IMR-90 (cell line): ENCODE measurements at regions of chr2 and their contacts with region 1.

Region 1: DNA sequence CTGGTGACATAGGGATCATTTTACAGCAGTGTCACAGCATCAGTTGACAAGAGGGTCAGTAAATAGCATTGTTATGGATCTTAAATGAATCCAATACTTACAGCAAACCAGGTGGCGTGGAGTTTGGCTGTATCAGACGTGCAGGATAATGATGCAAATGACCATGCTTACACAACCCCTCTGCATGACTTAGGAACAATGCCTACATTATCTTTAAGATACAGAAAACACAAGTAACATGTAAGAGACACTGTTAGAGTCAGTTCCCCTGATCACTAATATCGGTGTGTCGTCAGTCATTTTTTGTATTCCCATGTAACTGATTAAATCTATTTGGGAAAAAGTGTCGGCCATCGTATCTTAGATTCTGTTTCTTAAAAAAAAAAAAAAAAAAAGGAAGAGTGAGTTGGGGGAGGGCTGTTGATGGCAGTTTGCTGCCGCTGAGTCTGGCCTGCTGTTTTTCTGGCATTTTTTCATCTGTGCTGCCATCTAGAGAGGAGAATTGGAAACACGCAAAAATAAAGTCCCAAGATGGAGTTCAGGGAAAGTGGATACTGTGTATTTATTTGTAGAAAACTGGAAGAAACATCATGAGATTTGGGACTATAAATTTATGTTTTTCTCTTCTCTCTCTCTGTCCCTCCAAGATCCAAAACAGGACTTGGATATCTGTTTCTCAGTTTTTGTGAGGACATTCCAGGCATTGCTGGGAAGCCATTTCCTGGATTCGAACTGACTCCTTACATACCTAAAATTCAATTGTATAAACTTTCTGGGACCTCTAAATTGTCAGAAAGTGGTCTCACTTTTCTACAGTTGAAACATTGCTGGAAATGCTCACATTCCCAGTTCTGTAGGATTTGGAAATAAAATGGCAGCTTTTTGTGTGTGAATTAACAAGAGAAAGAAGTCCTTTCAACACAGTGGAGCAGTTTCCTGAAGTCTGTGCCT is 60.3 kb upstream of the AGPS start:
- DNase-seq: peak; percentile 83
- ATAC-seq: peak; percentile 74
- H3K4me3 ChIP-seq: no peak overlapping the region
- H3K27ac ChIP-seq: peak overlapping the region; percentile 98
- H3K4me1 ChIP-seq: peaks cover 18% of the 10 kb centered on the region
- H3K27me3 ChIP-seq: no peaks in the 10 kb centered on the region
- CTCF ChIP-seq: peak; percentile 78
- POLR2A ChIP-seq: no peak
- RAD21 ChIP-seq: peak; percentile 78

Region 2: DNA sequence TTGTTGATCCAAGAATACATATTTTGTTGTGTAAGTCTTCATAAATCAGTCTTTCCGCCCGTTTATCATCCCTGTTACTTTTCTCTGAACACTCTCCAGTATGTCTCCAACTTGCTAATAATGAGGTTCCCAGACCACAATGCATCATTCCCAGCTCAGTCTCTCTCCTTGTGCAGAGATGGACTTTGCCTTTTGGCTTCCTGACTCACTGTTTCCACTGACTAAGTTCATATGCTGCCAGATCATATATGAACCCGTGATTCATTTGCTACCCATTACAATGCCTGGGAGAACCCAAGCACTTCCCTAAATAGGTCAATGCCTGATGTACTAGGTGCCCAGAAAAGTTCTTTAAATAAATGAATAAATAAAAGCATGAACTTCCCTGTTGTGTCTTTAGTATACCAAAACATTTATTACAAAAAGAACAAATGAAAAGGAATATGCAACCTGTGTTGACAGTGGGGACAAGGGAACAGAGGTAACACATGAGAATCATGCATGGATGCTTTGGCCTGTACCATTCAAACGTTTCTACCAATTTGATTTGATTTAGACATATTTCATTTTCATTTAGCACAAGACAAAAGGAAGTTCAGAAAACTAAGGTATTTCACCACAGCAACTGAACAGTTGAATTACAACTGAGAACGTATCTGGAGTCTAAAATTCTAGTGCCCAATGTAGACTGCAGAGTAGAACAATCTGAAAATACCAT is 335.1 kb before region 1 on chr2:
- CTCF ChIA-PET with region 1: no interaction called
- POLR2A ChIA-PET with region 1: no interaction called
- dilution Hi-C with region 1: no loop called
- in situ Hi-C with region 1: no loop called
- intact Hi-C with region 1: no loop called
- DNase-seq: peak; percentile 72
- ATAC-seq: no peak
- H3K4me3 ChIP-seq: no peak overlapping the region
- H3K27ac ChIP-seq: no peak overlapping the region
- H3K4me1 ChIP-seq: no peaks in the 10 kb centered on the region
- H3K27me3 ChIP-seq: no peaks in the 10 kb centered on the region
- CTCF ChIP-seq: no peak
- POLR2A ChIP-seq: no peak
- RAD21 ChIP-seq: no peak

Region 3: DNA sequence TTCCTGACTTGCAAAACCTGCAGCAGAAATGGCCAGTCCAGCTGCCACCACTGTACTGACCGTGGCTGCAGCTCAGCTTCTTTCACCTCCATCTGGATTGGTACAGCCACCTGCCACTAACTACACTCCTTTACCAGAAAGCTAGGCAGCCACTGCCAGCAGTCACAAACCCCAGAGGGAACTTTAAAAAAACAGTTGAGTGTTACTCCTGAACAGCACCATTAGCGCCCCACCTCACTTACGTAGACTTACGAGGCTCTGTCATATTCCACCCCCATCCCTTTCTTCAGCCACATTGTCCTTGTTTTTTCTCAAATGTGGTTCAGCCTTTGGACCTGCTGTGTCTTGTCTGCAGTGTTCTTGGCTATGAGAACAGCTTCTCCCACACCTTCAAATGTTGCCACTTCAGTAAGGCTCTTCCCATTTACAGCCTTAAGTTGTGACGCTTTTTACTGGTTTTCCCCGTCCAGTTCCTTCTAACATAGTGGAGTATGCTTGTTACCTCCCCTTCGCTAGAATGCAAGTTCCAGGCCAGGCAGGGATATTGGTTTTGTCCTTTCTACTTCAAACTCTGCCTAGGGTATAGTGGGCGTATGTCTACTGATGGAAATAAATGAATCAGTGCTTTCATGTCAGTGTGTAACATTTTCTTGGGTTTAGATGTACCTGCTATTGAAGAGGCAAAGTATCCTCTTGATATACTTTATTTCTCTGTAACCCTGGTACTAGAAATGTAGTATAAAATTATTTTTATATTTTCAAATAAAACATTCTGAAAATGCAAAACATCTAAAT is 102.7 kb before region 1 on chr2:
- CTCF ChIA-PET with region 1: no interaction called
- POLR2A ChIA-PET with region 1: no interaction called
- dilution Hi-C with region 1: no loop called
- in situ Hi-C with region 1: no loop called
- intact Hi-C with region 1: loop called (anchors 2 kb)
- DNase-seq: no peak
- ATAC-seq: no peak
- H3K4me3 ChIP-seq: no peak overlapping the region
- H3K27ac ChIP-seq: peak overlapping the region; percentile 14; the same call in 1 of the 2 replicates
- H3K4me1 ChIP-seq: peaks cover 8% of the 10 kb centered on the region; the same call in 1 of the 2 replicates
- H3K27me3 ChIP-seq: no peaks in the 10 kb centered on the region
- CTCF ChIP-seq: no peak
- POLR2A ChIP-seq: no peak; the same call in 1 of the 2 replicates
- RAD21 ChIP-seq: no peak

Region 4: GRCh38 chr2:177263451-177264208 is 68.7 kb before region 1 on chr2:
- CTCF ChIA-PET with region 1: interaction called, 8 read pairs
- POLR2A ChIA-PET with region 1: interaction called, 6 read pairs
- dilution Hi-C with region 1: no loop called
- in situ Hi-C with region 1: loop called (anchors 5 kb)
- intact Hi-C with region 1: loop called (anchors 1 kb)
- DNase-seq: peak; percentile 97
- ATAC-seq: peak; percentile 50
- H3K4me3 ChIP-seq: peak overlapping the region; percentile 69
- H3K27ac ChIP-seq: peak overlapping the region; percentile 89
- H3K4me1 ChIP-seq: peaks cover 3% of the 10 kb centered on the region
- H3K27me3 ChIP-seq: no peaks in the 10 kb centered on the region
- CTCF ChIP-seq: peak; percentile 90
- POLR2A ChIP-seq: peak; percentile 62
- RAD21 ChIP-seq: peak; percentile 77

Region 5: DNA sequence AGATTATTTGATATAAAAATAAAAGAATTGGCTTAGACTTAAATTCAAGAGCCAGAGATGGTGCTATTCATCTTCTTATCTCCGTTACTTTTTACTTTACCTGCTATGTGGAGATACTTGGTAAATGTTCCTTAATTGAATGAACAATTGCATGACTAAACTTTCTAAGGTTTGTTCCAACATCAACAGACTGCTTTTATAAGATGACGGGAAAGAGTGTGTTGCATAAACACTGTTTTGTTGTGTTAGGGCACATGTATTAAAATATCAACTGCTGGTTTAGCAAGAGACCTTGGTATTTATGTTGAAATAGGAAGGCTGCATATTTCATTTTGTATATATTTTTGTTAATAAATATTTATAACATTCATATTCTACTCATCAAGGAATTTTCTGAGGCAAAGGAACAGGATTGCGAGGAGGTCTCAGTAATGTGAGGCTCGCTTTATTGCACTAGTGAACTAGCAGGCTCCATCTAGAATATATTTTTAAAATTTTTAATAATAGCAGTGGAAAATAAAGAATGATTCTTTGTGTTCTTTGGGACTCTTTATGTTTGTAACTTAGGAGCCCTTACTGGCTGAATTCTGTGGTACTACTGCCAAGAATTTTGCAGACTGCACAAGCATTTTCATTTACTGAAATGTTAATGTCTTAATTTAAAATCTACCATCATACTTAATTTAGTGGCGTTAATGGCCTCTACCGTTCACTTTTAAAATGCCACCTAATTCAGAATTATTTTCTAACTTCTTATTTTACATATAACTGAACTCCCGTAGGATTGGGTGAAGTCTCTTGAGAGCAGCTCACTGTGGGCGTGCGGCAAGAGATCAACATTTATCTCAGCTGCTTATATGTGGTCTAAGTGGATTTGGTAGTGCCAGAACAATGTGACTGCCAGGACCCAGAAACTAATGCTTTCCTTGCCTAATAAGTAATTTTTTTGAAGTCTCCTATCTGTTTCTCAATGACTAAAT is 57.0 kb before region 1 on chr2:
- CTCF ChIA-PET with region 1: no interaction called
- POLR2A ChIA-PET with region 1: no interaction called
- dilution Hi-C with region 1: no loop called
- in situ Hi-C with region 1: no loop called
- intact Hi-C with region 1: no loop called
- DNase-seq: peak; percentile 94
- ATAC-seq: peak; percentile 89
- H3K4me3 ChIP-seq: no peak overlapping the region
- H3K27ac ChIP-seq: peak overlapping the region; percentile 97
- H3K4me1 ChIP-seq: peaks cover 5% of the 10 kb centered on the region
- H3K27me3 ChIP-seq: no peaks in the 10 kb centered on the region
- CTCF ChIP-seq: no peak
- POLR2A ChIP-seq: no peak
- RAD21 ChIP-seq: no peak

Region 6: DNA sequence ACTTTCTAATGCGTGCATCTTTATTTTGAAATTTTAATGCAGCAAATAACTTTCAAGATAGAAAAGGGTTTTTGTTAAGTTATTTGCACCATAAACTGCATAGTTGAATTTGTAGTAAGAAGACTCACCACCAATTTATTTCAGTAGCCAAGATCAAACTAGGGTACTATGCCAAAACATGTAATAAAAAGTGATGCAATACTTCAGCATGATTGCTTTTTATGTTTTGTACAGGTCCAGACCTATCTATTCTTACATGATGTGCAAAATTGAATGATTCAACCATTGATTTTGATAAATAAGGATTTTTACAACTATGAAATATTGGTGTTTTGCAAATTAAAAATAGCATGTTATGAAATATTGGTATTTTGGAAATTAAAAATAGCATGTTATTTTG is 87.0 kb after region 1 on chr2:
- CTCF ChIA-PET with region 1: interaction called, 13 read pairs
- POLR2A ChIA-PET with region 1: no interaction called
- dilution Hi-C with region 1: no loop called
- in situ Hi-C with region 1: loop called (anchors 5 kb)
- intact Hi-C with region 1: loop called (anchors 1 kb)
- DNase-seq: peak; percentile 61
- ATAC-seq: no peak
- H3K4me3 ChIP-seq: no peak overlapping the region
- H3K27ac ChIP-seq: no peak overlapping the region
- H3K4me1 ChIP-seq: no peaks in the 10 kb centered on the region
- H3K27me3 ChIP-seq: no peaks in the 10 kb centered on the region
- CTCF ChIP-seq: no peak
- POLR2A ChIP-seq: no peak
- RAD21 ChIP-seq: no peak

Region 7: DNA sequence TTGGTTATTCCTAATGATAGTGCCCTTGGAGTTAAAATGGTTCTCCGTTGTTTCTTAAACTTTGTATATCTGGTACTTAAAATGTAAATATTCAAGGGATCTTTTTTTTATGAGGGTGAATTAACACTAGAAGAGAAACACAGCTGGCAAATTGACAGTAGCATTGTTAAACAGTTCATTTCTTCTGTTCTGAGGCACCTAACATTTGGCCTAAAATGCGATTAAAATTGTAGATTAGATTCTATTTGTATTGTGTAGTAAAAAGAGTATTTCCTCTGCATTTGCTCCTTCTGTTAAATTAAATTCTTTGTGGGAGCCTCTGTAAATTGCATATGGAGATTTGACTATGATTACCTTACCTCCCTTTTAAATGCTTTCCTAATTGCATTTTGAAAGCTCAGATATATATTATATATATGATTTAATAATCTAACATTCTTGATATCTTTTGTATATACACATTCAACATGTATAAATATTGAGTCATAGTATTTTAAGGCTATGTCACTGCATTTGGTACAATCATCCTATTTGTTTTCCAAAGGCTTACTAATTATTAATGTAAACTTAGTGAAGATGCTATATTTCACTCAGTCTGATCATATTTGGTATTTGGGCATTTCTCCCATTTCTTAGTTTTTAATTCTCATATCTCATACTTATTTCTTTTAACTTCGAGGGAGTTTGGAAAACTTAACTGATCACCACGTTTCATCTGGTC is 184.7 kb after region 1 on chr2:
- CTCF ChIA-PET with region 1: no interaction called
- POLR2A ChIA-PET with region 1: no interaction called
- dilution Hi-C with region 1: no loop called
- in situ Hi-C with region 1: no loop called
- intact Hi-C with region 1: no loop called
- DNase-seq: peak; percentile 12
- ATAC-seq: peak; percentile 24; the same call in 1 of the 2 replicates
- H3K4me3 ChIP-seq: no peak overlapping the region
- H3K27ac ChIP-seq: no peak overlapping the region
- H3K4me1 ChIP-seq: peaks cover 2% of the 10 kb centered on the region; the same call in 1 of the 2 replicates
- H3K27me3 ChIP-seq: no peaks in the 10 kb centered on the region
- CTCF ChIP-seq: no peak
- POLR2A ChIP-seq: no peak
- RAD21 ChIP-seq: no peak

Region 8: DNA sequence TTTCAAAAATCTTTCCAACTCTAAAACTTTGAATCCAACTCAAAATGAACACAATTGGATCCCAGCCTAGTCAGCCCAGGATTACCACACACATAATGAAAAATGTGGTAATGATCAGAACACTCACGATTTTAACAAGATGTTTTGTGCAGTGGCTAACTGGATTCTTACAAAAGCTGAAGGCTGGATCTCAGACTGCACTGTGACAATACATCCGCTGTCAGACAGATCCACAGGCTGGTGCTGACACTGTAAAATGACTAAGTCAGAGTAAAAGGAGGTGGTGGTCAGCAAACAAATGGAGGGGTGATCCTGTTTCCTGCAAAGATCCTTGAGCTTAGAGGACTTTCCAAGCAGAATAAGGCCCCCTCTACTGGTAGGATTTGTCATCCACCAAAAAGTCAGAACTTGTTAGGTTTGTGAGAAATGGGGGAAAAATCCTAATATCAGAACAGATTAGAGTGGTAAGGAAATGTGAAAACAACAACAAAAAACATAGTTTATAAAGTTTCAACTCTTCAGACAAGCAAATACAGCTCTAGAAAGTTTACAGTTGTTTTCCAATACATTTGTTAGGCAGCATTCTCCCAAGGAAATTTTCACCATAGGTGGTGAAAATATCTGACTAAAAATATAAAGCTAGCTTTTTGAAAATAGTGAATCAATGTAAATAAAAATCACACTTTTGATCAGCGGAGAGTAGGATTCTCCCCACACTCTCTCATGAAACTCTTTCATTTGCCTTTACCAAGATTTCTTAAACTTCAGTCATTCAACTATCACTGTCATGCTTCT is 272.2 kb after region 1 on chr2:
- CTCF ChIA-PET with region 1: no interaction called
- POLR2A ChIA-PET with region 1: no interaction called
- dilution Hi-C with region 1: no loop called
- in situ Hi-C with region 1: loop called (anchors 10 kb)
- intact Hi-C with region 1: loop called (anchors 1 kb)
- DNase-seq: peak; percentile 71
- ATAC-seq: peak; percentile 91
- H3K4me3 ChIP-seq: no peak overlapping the region
- H3K27ac ChIP-seq: no peak overlapping the region; the same call in 1 of the 2 replicates
- H3K4me1 ChIP-seq: peaks cover 2% of the 10 kb centered on the region
- H3K27me3 ChIP-seq: peaks cover 4% of the 10 kb centered on the region; the same call in 1 of the 2 replicates
- CTCF ChIP-seq: peak; percentile 72
- POLR2A ChIP-seq: no peak
- RAD21 ChIP-seq: peak; percentile 63

Region 9: DNA sequence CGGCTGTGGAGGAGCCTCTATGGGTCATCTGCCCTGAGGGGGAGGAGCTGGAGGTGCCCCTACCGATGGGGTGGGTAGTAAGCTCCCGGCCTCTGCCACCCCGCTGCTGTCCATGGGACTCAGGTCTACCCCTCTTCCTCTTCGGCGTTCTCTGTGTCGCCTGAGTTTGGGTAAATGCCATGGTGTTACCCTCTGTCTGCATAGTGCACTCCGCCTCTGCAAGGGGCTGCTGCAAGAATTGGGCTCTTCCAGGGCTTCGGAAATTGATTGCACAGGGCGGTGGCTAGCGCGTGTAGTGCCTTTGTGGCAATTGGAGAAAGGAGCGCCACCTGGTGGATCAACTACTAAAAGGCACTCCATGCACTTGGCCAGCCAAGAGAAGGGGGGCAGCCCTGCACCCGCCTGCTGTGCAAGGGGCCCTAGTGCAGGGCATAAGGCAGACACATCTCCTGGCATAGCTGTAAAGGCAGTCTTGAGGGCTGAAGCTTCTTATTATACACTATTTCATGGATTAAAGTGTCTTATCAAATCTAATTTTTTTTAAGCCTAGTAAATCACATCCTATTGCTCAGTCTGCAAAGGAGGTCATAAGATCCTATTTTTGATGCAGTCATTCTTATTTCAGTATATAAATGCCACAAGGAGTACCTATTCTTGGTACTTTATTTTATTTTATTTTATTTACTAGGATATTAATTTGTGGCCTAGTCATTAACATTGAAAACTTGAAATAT is 431.4 kb after region 1 on chr2:
- CTCF ChIA-PET with region 1: interaction called, 9 read pairs
- POLR2A ChIA-PET with region 1: no interaction called
- dilution Hi-C with region 1: no loop called
- in situ Hi-C with region 1: no loop called
- intact Hi-C with region 1: loop called (anchors 1 kb)
- DNase-seq: peak; percentile 58
- ATAC-seq: peak; percentile 98
- H3K4me3 ChIP-seq: no peak overlapping the region
- H3K27ac ChIP-seq: no peak overlapping the region
- H3K4me1 ChIP-seq: no peaks in the 10 kb centered on the region
- H3K27me3 ChIP-seq: peaks cover 4% of the 10 kb centered on the region; the same call in 1 of the 2 replicates
- CTCF ChIP-seq: peak; percentile 71
- POLR2A ChIP-seq: no peak
- RAD21 ChIP-seq: peak; percentile 55